Right ventricle myocardium inferior (tissue), 1 donor: ENCODE measurements at regions of chr16 and their contacts with region 1.

Region 1: GRCh38 chr16:67968400-67969253 is at the start of gene SLC12A4:
- DNase-seq: peak; percentile 92
- ATAC-seq: peak; percentile 89
- total RNA-seq, gene SLC12A4: 97.5 TPM

Region 2: GRCh38 chr16:67736858-67737257 is 231.8 kb before region 1 on chr16:
- intact Hi-C with region 1: no loop called
- DNase-seq: no peak
- ATAC-seq: no peak

Region 3: GRCh38 chr16:67750466-67750865 is 218.2 kb before region 1 on chr16:
- intact Hi-C with region 1: no loop called
- DNase-seq: no peak
- ATAC-seq: no peak

Region 4: GRCh38 chr16:67841764-67842508 is 126.7 kb before region 1 on chr16 and contains the start of gene THAP11:
- intact Hi-C with region 1: no loop called
- DNase-seq: peak; percentile 96
- ATAC-seq: peak; percentile 81
- total RNA-seq, gene THAP11: 32.3 TPM

Region 5: DNA sequence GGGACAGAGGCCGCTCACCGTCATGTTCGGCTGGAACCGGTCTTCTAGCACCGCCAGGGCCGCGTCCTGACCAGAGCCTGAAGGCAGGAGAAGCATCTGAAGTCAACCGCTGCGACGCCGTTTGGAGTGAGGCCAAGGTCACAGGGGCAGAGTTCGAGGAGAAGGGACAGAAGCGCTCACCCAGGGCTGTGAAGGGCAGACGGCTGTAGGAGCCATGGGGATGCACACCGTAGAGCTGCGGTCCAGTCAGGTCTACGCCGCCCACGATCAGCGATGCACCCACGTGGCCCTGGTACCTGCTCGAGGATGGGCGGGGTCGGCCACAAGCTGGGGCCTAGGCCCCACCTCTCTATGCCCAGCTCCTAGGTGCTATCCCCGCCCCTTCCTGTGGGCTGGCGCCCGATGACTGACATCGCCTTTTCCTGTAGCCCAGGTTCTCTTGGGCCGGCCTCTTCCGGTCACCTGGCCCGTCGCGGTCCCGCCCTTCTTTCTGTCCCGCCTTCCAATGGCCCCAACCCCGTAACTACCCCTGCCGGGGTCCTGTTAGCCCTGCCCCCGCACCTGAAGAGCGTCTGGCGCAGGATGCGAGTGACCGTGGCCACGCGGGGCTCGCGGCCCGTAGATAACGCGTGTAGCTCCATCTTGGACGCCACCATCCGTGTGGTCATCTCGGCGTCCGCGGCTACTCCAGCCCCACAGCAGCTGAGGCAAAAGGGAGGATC is 33.1 kb before region 1 on chr16:
- intact Hi-C with region 1: loop called (anchors 2 kb)
- DNase-seq: peak; percentile 98
- ATAC-seq: peak; percentile 93